ENCODE measurements at regions of chr17 and their contacts with region 1.

Region 1: DNA sequence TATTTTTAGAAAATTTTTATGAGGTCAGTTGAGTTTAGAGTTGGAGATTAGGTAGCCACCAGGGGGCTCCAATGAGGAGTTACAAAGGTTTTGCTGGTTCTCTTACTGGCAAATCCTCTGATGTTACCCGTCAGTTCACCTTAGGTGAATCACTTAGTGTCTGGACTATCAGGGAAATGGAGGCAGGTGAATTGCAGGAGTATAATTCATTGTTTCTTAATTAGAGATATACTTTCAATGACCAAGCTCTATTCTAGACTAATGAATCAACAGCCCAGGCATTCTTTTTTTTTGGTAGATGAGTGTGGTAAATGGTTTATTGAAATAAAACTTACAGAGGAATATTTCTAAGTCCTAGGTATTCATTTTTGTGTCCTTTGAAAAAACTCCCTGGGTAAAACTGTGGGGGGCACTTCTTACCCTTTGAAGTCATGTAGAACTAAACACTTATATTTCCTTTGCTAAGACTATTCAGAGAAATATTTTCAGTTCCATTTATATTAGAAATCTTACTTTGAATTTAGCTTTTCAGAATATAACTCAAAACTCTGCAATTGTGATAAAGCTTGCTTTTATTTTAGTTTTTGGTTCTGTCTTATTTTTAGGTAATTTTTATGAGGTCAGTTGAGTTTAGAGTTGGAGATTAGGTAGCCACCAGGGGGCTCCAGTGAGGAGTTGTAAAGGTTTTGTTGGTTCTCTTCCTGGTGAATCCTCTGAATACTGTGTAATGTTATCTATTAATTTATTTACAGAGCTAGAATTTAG is 17.7 kb downstream of the PSMD11 start:
- DNase-seq: no peak
- CTCF ChIP-seq: peak; percentile 43

Region 2: DNA sequence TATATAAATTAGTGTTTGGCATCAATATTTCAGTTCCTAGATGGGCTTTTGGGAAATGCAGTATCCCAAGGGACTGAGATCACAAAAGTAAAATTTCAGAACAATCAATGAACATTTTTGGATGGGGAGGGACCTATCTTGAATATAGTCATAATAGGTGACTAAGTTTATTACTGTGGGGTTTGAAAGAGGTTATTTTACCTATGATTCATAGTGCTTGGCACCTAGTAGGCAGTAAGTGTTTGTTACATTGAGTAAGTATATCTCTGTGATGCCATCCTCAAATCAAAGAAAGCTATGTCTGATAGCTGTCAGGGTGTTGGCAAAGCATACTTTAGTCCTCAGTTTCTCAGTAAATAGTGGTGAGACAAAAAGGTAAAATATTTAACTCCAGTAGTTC is 75.2 kb before region 1 on chr17:
- CTCF ChIA-PET with region 1: no interaction called
- POLR2A ChIA-PET with region 1: no interaction called
- DNase-seq: no peak
- CTCF ChIP-seq: no peak

Region 3: GRCh38 chr17:32486111-32486700 is 24.2 kb after region 1 on chr17:
- CTCF ChIA-PET with region 1: interaction called, 177 read pairs
- POLR2A ChIA-PET with region 1: interaction called, 3 read pairs
- DNase-seq: peak; percentile 91
- CTCF ChIP-seq: no peak

Region 4: GRCh38 chr17:32523017-32523680 is 61.1 kb after region 1 on chr17:
- CTCF ChIA-PET with region 1: interaction called, 12 read pairs
- POLR2A ChIA-PET with region 1: no interaction called
- DNase-seq: peak; percentile 77
- CTCF ChIP-seq: no peak

Region 5: DNA sequence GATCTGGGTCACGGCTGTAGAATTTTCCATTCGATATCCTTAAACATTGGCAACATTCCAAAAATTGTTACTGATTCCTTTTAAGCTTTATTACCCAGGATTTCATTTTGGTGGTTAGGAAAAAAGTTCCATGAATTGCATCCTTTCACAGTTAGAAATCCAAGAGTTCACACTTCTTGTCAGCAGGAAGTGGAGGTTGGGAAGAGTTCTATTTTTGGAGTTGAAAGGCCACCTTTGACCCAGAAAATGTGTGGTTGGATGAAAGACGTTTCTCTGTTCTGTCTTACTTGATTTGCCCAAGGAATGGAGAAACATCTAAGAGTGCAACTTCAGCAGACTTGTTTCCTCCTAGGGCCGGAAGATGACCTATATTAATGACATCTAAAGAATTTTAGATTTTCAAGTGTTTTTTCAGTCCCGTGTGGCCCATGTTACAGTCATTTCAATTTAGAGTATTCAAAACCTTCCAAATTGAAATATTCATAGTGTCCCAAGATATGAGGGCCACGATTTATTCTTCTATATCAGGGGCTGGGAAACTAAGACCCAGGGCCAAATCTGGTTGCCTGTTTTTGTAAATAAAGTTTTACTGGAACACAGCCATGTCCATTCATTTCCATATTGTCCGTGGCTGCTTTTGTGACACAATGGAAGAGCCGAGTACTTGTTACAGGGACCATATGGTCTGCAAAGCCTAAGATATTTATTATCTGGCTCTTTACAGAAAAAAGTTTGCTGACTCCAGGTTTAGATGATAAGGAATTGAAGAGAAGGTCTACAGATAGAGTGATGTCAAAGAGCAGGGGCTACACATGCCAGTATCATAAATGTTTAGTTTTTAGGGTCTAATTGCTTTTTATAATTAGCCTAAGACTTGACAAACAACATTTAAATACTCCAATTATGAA is 75.0 kb after region 1 on chr17:
- CTCF ChIA-PET with region 1: no interaction called
- POLR2A ChIA-PET with region 1: no interaction called
- DNase-seq: no peak
- CTCF ChIP-seq: no peak

Region 6: DNA sequence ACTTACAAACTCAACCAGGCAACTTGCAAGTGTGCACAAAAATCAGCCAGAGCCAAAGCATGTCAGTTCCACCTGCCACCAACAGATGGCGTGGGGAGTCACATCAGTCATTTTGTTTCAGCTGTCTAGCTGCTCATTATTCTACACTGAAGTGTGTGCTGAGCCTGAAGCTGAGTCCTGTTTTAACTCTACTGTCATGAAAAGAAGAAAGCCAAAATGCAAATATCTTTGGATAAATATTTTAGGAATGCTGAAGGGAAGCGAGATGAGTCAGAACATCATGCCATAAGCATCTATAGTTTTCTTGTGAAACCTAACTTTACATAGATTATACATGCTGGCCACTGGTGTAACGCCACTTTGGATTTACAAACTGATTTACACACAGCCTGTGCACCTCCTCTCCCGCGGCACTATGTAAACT is 197.4 kb after region 1 on chr17:
- CTCF ChIA-PET with region 1: interaction called, 12 read pairs
- POLR2A ChIA-PET with region 1: no interaction called
- DNase-seq: peak; percentile 79
- CTCF ChIP-seq: peak; percentile 75

Region 7: DNA sequence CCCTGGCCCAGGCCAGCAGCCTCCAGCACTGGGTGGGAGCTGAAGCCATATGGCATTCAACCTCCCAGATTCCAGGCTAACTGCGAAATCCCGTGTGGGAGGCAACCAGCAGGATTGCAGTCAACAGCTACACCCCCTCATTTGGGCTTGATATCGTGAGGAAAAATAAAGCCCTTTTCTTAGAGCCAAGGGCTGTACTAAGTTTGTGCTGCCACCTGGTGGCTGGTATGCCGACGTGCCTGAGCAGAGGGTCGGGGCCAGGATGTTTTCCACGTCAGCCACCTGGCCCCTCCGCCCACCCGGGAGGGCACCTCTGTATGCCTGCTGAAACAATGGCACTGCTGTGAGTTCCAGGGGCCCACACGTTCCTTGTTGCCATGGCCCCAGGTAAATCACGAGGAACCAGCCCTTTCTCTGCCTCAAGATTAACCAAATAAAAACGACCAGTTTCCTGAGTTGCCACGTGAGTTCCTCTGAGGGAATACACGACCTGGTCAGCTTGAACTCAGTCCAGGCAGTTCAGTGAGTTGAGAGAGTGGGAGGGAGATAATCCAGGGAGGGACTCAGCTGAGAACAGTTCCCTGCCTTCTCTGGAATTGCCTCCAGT is 475.0 kb after region 1 on chr17:
- CTCF ChIA-PET with region 1: interaction called, 24 read pairs
- POLR2A ChIA-PET with region 1: no interaction called
- DNase-seq: peak; percentile 82
- CTCF ChIP-seq: peak; percentile 88